ENCODE measurements at regions of chr16 and their contacts with region 1.

Region 1: DNA sequence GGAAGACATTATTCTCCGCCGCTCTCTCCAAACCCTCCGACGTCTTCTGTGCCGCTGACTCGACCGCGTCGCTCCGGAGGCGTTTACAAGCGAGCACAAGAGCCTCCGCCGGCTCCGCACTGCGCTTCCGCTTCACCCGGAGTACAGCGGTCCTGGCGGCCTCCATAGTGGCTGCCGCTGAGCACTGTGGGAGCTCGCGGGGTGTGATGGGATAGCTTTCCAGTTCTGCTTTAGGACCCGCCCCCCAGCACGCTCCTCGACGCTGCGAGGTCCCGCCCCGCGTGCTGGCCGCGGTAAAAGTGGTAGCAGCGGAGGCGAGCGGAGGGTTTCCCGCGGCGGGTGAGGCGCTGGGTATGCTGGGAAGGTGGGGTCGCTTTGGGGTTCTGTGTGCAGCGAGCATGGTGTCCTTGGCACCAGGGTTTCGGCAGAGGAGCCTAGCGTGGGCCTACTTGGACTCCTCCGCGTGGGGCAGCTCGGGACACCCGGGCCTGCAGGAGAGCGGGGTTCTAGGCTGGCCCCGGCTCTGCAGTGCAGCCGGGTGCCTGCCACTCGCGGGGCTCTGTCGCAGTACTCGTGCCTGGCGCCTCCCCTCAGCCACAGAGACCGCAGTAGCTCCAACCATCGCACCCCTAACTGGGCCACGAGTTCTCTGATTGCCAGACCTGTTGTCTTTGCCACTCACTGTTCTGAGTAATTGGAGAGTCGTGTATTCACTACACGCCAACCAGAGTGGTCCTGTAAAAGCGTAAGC is at the starts of genes PRMT7 and SLC7A6OS:
- DNase-seq: peak; percentile 81
- ATAC-seq: peak; percentile 99
- H3K4me3 ChIP-seq: peak within 1 kb of the TSS; percentile 98
- H3K27ac ChIP-seq: peak within 1 kb of the TSS; percentile 48
- H3K4me1 ChIP-seq: peaks cover 6% of the 10 kb centered on the region; the same call in 1 of the 2 replicates
- H3K27me3 ChIP-seq: no peaks in the 10 kb centered on the region
- CTCF ChIP-seq: no peak
- total RNA-seq, gene PRMT7: 46.4 and 48.1 TPM in 2 replicates
- total RNA-seq, gene SLC7A6OS: 12.6 TPM in 2 replicates

Region 2: GRCh38 chr16:67892899-67893742 is 417.8 kb before region 1 on chr16 and contains the start of gene PSKH1:
- CTCF ChIA-PET with region 1: no interaction called
- POLR2A ChIA-PET with region 1: no interaction called
- intact Hi-C with region 1: no loop called
- DNase-seq: peak; percentile 92
- ATAC-seq: peak; percentile 98
- H3K4me3 ChIP-seq: peak within 1 kb of the TSS; percentile 92
- H3K27ac ChIP-seq: peak within 1 kb of the TSS; percentile 39; the same call in 1 of the 2 replicates
- H3K4me1 ChIP-seq: peaks cover 13% of the 10 kb centered on the region
- H3K27me3 ChIP-seq: no peaks in the 10 kb centered on the region
- CTCF ChIP-seq: no peak
- total RNA-seq, gene PSKH1: 6.6 and 8.3 TPM in 2 replicates

Region 3: GRCh38 chr16:68244903-68245853 is 65.8 kb before region 1 on chr16 and contains the start of gene PLA2G15:
- CTCF ChIA-PET with region 1: no interaction called
- POLR2A ChIA-PET with region 1: no interaction called
- intact Hi-C with region 1: loop called (anchors 5 kb)
- DNase-seq: peak; percentile 82
- ATAC-seq: peak; percentile 94
- H3K4me3 ChIP-seq: peak within 1 kb of the TSS; percentile 91
- H3K27ac ChIP-seq: no peak within 1 kb of the TSS
- H3K4me1 ChIP-seq: peaks cover 15% of the 10 kb centered on the region; the same call in 1 of the 2 replicates
- H3K27me3 ChIP-seq: no peaks in the 10 kb centered on the region
- CTCF ChIP-seq: no peak
- total RNA-seq, gene PLA2G15: 16.4 and 16.8 TPM in 2 replicates

Region 4: DNA sequence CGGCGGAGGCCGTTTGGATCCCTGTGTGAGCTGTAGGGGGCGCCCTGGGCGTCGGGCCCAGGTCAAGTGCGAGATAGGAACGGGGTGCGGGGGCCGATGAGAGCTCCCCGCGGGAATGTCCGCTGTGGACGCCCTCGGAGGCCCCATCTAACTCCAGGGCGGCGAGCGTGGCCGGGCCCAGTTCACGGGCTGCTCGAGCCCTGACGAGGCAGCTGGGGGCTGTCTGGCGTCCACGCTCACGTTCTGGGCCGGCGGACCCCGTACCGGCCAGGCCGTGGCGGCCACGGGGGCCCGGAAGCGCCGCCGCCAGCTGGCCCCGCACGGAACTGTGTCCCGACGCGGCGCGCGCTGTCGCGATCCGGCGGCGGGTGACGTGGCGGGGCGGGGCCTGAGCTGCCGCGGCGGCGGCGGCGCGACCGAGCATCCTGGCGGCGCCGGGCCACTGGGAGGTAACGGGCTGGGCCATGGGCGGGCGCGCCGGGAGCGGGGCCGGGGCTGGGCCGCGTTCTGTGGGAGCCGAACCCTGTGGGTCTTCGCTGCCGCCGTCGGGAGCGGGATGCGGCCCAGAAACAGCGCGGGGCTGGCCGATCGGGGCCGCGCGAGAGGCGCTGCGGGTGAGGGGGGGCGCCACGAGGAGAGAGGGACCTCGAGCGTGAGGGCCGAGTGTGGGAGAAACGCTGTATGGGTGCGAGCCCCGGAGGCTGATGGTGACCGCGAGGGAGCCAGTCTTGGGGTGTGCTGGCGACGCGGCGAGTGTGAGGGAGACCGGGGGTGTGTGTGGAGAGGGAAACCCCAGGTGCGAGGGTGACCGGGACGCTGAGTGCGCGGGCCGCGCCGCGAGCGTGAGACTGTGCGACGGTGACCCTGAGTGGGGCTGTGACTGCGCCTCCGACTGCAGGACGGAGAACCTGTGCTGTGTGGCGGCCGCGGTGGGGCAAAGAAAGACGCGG is 46.5 kb before region 1 on chr16 and contains the start of gene SLC7A6:
- CTCF ChIA-PET with region 1: interaction called, 14 read pairs
- POLR2A ChIA-PET with region 1: interaction called, 10 read pairs
- intact Hi-C with region 1: no loop called
- DNase-seq: peak; percentile 74
- ATAC-seq: peak; percentile 70
- H3K4me3 ChIP-seq: peak within 1 kb of the TSS; percentile 92
- H3K27ac ChIP-seq: peak within 1 kb of the TSS; percentile 63
- H3K4me1 ChIP-seq: peaks cover 14% of the 10 kb centered on the region; the same call in 1 of the 2 replicates
- H3K27me3 ChIP-seq: no peaks in the 10 kb centered on the region
- CTCF ChIP-seq: peak; percentile 57
- total RNA-seq, gene SLC7A6: 22.2 and 24.7 TPM in 2 replicates

Region 5: DNA sequence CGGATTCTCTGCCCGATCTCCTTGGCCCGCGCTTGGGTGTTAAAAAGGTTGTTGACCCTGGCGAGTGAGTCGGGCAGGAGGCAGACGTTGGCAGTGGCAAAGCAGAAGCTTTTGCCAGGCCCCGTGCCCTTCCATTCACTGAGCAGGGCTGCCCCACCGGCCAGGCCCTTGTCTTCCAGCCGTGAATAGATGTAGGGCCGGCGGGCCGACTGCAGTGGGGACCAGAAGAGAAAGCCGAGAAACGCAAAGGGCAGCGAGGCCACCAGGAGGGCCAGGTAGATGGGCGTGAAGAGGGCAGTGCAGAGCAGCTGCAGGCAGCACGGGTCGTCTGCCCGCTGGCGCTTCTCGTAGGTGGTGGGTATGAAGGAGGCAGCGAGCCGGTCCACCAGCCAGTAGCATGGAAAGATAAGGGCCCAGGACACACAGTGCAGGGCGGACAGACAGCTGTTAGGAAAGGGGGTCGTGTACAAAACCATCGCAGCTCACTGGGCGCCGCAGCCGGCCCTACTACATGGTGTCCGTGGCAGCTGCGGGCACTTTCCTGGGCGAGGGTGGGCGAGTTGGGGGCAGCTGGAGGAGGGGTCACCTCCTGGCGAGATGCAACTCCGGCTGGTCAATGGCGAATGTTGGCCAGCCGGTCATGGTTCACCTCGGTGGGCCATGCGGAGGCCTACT is 60.9 kb after region 1 on chr16:
- CTCF ChIA-PET with region 1: no interaction called
- POLR2A ChIA-PET with region 1: no interaction called
- intact Hi-C with region 1: no loop called
- DNase-seq: no peak
- ATAC-seq: no peak
- H3K4me3 ChIP-seq: no peak overlapping the region
- H3K27ac ChIP-seq: no peak overlapping the region
- H3K4me1 ChIP-seq: no peaks in the 10 kb centered on the region
- H3K27me3 ChIP-seq: no peaks in the 10 kb centered on the region
- CTCF ChIP-seq: no peak

Region 6: GRCh38 chr16:68382296-68382718 is 71.4 kb after region 1 on chr16:
- CTCF ChIA-PET with region 1: no interaction called
- POLR2A ChIA-PET with region 1: no interaction called
- intact Hi-C with region 1: no loop called
- DNase-seq: no peak
- ATAC-seq: no peak; the same call in 1 of the 2 replicates
- H3K4me3 ChIP-seq: no peak overlapping the region
- H3K27ac ChIP-seq: no peak overlapping the region
- H3K4me1 ChIP-seq: no peaks in the 10 kb centered on the region; the same call in 1 of the 2 replicates
- H3K27me3 ChIP-seq: no peaks in the 10 kb centered on the region
- CTCF ChIP-seq: peak; percentile 37; the same call in 1 of the 2 replicates

Measured in PC-3 (cell line).